ENCODE measurements at regions of chr5 and their contacts with region 1.

Region 1: GRCh38 chr5:89036704-89037489 is 153.9 kb upstream of the MEF2C start:
- DNase-seq: peak; percentile 97
- ATAC-seq: peak; percentile 73
- H3K4me3 ChIP-seq: peak overlapping the region; percentile 22; the same call in 1 of the 2 replicates
- H3K27ac ChIP-seq: peak overlapping the region; percentile 97
- H3K4me1 ChIP-seq: peaks cover 48% of the 10 kb centered on the region
- H3K27me3 ChIP-seq: no peaks in the 10 kb centered on the region
- CTCF ChIP-seq: no peak

Region 2: GRCh38 chr5:88785391-88786219 is 251.3 kb before region 1 on chr5:
- CTCF ChIA-PET with region 1: no interaction called
- POLR2A ChIA-PET with region 1: no interaction called
- intact Hi-C with region 1: loop called (anchors 5 kb)
- DNase-seq: peak; percentile 95
- ATAC-seq: peak; percentile 95
- H3K4me3 ChIP-seq: peak overlapping the region; percentile 51
- H3K27ac ChIP-seq: peak overlapping the region; percentile 97
- H3K4me1 ChIP-seq: peaks cover 28% of the 10 kb centered on the region
- H3K27me3 ChIP-seq: no peaks in the 10 kb centered on the region
- CTCF ChIP-seq: no peak

Region 3: DNA sequence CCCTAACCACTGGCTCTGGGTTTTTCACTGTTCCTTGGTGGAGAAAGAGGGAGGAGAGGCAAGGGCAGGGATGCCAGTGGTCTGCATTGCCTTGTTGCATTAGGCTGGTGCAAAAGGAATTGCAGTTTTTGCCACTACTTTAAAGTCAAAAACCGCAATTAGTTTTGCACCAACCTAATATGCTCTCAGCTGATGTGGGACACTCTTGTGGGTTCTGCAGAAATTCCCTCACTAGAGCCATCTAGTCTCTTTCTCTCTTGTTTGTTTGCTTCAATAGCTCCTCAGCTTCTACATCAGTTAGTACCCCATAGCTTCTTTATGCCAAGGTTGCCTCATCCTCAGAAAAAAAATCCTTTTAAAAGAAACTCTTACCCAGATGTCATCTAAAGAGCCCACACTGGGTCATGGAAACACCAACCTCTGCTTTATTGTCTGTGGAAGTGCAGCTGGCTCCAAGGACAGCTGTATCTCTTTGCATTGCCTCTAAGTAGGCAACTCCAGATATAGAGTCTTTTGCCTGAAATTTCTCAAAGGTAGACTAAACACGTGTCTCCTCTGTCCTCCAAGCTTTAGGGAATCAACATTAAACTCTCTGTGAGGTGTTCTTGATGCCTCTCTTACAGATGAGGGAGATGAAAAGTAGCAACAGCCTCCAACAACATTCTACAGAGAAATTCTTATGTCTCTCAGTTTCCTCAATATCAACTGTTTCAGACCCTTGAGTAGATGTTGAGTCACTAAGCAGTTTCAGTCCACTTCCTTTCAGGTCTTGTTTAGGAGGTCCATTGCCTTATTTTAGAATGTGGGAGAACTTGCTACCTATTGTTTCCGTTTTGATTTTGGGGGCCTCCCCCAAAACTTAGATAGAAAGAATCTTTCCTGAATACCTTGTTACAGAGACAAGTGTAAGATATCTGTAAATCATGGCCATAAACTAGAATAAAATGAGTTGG is 69.0 kb before region 1 on chr5:
- CTCF ChIA-PET with region 1: no interaction called
- POLR2A ChIA-PET with region 1: no interaction called
- intact Hi-C with region 1: loop called (anchors 2 kb)
- DNase-seq: no peak
- ATAC-seq: no peak
- H3K4me3 ChIP-seq: no peak overlapping the region
- H3K27ac ChIP-seq: no peak overlapping the region
- H3K4me1 ChIP-seq: peaks cover 24% of the 10 kb centered on the region
- H3K27me3 ChIP-seq: no peaks in the 10 kb centered on the region
- CTCF ChIP-seq: no peak

Region 4: DNA sequence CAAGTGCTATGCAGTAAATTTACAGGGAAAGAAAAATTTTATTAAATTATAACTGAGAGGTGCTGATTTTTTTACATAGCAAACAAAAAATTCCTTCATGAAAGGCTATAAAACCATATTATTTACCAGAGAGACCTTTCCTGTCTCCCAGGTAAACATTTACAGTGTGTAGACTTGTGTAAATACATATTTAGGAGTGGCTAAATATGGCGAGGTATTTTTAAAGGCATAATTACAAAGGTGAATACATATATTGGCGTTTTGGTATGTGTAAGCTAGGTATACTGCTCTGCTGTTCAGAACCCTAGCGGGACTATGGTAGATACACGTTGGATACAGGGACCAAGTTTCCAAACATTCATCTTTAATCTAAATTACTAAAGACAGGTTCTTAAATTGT is 16.6 kb after region 1 on chr5:
- CTCF ChIA-PET with region 1: interaction called, 7 read pairs
- POLR2A ChIA-PET with region 1: no interaction called
- intact Hi-C with region 1: loop called (anchors 1 kb)
- DNase-seq: peak; percentile 80
- ATAC-seq: peak; percentile 99
- H3K4me3 ChIP-seq: no peak overlapping the region
- H3K27ac ChIP-seq: peak overlapping the region; percentile 59
- H3K4me1 ChIP-seq: peaks cover 22% of the 10 kb centered on the region
- H3K27me3 ChIP-seq: no peaks in the 10 kb centered on the region
- CTCF ChIP-seq: no peak

Region 5: DNA sequence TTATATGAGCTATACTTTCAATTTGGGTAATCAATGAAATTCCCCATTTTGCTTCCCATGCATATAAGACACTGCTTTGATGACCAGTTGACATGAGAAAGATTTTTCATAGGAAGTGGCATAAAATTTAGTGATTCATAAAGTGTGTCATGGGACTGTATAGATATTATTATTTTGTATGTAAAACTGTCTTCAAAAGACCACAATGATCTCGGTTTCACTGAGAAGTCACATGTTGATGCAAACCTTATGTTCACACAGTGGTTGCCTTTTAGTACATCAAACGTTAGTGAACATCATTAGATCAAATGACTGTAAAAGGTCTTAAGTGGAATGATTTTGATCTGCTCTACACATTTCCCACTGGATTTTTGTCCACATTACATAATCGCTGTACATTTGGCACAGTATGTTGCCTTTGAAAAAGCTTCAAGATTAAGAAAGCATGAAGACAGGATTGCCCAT is 195.3 kb after region 1 on chr5:
- CTCF ChIA-PET with region 1: no interaction called
- POLR2A ChIA-PET with region 1: no interaction called
- intact Hi-C with region 1: loop called (anchors 10 kb)
- DNase-seq: no peak
- ATAC-seq: no peak
- H3K4me3 ChIP-seq: no peak overlapping the region
- H3K27ac ChIP-seq: no peak overlapping the region
- H3K4me1 ChIP-seq: no peaks in the 10 kb centered on the region
- H3K27me3 ChIP-seq: no peaks in the 10 kb centered on the region
- CTCF ChIP-seq: no peak